Right ventricle myocardium inferior (tissue), 1 donor: ENCODE measurements at regions of chr2 and their contacts with region 1.

Region 1: DNA sequence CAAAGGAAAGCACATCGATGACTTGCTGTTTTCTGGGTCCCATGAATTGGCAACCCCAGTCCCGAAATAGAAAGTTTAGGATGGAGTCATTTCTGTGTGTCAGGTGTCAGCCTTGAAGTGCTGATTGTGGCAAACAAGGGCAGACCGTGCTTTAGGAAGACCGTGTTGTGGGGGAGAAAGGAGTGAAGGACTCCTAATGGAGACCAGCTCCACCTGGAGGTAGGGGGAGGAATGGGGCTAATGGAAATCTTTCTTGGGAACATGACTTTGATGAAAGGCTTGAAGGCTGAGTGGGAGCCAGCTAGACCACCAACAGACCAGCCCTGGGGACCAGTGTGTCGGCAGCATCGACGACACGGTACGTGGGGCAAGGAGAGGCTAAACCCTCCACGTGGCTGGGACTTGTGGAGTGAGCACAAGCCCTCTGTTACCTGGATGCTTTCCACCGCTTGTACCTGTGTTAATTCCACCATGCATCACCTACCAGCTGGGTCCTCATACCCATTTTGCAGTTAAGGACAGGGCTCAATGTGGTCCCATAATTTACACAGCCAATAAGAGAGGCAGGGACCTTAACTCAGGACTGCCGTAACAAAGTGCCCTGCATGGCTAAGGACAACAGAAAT is 104.2 kb downstream of the SH3BP4 start:
- DNase-seq: no peak
- ATAC-seq: no peak

Region 2: DNA sequence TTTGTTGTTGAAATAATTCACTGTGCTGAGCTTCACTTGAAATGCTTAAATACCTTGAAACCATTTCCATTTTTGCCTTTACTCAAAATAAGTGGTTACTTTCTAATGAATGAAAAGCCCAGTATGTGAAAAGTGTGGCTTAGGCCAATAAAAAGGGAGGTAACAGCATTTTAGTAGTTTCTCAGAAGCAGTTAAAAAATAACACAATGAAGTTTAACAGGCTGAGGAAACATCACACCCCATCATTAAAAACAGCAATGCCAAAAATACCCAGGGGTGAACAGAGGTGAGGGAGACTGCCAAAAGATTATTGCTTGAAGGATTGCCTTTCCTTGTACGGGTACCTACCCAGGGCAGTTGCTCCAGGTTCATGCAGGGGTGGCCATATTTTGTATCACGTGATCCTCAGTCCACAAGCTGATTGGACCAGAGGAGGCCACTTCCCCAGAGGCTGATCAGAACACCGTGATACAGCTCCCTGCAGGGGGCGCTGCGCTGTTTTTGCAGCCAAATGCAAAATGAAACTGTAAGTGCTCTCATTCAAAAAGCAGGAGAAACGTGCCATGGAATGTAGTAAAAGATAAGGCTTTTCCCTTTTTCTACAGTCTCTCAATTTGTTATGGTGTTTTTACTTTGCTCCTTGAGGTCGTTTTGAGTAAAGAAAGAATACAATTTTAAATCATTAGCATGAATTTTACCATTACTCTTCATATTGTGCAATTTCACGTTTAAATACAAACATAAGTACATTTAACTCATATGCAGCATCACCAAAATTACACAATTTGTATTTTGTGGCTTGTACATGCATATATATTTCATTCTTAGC is 174.4 kb before region 1 on chr2:
- intact Hi-C with region 1: loop called (anchors 5 kb)
- DNase-seq: peak; percentile 79
- ATAC-seq: peak; percentile 94

Region 3: DNA sequence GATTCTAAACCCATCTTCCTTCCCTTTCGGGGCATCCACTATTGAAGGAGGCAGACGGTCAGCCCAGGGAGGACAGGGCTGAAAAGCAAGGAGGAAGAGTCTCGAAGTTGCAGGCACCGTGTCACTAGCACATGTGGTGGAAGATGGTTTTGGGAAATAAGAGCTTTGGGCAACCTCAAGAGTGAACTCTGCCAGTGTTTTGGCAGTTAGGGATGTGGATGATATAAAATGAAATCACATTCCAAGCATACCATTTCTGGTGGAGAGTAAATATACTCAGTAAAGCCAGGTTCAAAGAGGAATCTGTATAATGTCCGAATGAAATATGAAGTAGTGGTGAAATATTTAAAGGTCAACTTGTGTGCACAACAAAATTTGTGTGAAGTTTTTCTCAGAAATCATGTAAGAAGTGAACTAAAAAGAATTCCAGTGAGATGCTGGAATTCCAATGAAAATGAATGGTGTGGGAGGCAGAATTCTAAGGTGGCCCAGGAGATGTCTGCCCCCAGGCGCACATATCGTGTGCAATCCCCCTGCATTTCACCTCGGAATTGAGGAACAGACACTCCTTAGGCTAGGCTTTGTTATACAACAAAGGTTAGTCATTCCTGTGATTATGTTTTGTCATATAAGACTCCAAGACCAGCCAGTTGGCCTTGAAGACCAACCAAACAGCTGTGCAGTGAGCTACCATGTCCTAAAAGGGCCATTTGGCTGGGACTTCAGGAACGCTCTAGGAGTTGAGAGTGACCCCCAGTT is 42.9 kb after region 1 on chr2:
- intact Hi-C with region 1: no loop called
- DNase-seq: no peak
- ATAC-seq: no peak